ENCODE measurements at regions of chr11 and their contacts with region 1.

Region 1: DNA sequence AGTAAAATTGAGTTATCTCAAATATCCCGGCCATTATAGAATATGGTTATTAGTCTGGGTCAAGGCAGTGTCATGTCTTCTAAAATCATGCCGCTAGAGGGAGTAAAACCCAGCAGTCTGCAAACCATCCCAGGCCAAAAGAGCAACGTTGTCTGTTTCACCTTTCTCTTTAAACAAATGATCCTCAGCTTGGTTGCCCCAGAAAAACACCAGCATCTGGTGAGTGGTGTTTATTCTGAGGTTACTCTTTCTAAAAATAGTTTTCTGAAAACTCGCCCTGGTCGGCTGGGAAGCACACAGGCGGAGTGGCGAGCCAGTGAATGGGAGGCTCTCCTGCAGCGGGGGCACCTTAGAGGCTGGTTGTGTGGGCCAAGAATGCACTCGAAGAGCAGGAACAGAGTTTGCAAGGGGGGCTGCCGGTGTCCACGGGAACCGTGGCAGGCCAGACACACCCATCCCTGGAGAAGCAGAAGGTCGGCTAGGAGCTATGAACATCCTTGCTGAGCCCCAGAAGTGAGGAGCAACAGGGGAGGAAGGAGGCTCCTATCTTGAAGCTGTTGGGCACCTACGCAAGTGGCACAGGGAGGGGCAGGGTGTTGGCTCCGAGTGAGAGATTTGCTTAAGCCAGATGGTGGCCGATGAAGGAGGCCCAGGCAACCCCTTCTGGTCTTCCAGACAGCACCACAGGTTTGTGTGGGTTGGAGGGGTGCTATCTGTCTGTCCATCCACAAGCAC is 297.1 kb downstream of the ETS1 start:
- DNase-seq: peak; percentile 80 to 89 (median 87)
- ATAC-seq: peak; percentile 85
- H3K4me3 ChIP-seq: peak overlapping the region; percentile 10
- H3K4me1 ChIP-seq: peaks cover 24% of the 10 kb centered on the region
- CTCF ChIP-seq: peak; percentile 70

Region 2: DNA sequence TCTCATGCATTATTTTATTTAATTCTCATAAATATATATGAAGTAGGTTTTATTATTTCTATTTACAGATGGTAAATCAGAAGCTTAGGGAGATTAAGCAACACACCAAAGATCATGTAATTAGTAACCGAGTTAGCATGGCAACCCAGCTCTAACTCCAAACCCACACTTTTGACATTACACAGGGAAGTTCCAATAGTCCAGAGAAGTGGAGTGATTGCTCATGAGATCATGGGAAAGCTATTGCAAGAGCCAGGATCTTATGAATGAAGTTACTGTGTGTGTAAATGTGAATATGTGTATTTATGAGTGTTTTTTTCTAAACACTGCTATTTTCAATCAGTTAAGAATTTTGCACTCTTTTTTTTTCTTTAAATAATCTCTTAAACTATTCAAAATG is 1063.9 kb before region 1 on chr11:
- intact Hi-C with region 1: no loop called
- DNase-seq: no peak
- ATAC-seq: no peak
- H3K4me3 ChIP-seq: no peak overlapping the region
- H3K4me1 ChIP-seq: no peaks in the 10 kb centered on the region
- CTCF ChIP-seq: no peak

Region 3: GRCh38 chr11:128624269-128625175 is 334.2 kb after region 1 on chr11:
- intact Hi-C with region 1: loop called in 1 of 2 experiments (anchors 5 kb)
- DNase-seq: peak; percentile 34 to 74 (median 54)
- ATAC-seq: peak; percentile 63
- H3K4me3 ChIP-seq: no peak overlapping the region
- H3K4me1 ChIP-seq: peaks cover 5% of the 10 kb centered on the region
- CTCF ChIP-seq: no peak

Region 4: GRCh38 chr11:128630367-128631230 is 340.3 kb after region 1 on chr11:
- intact Hi-C with region 1: loop called (anchors 2 to 5 kb)
- DNase-seq: peak; percentile 88 to 93 (median 90)
- ATAC-seq: peak; percentile 93
- H3K4me3 ChIP-seq: no peak overlapping the region
- H3K4me1 ChIP-seq: peaks cover 13% of the 10 kb centered on the region
- CTCF ChIP-seq: peak; percentile 67